ENCODE measurements at regions of chr1 and their contacts with region 1.

Region 1: DNA sequence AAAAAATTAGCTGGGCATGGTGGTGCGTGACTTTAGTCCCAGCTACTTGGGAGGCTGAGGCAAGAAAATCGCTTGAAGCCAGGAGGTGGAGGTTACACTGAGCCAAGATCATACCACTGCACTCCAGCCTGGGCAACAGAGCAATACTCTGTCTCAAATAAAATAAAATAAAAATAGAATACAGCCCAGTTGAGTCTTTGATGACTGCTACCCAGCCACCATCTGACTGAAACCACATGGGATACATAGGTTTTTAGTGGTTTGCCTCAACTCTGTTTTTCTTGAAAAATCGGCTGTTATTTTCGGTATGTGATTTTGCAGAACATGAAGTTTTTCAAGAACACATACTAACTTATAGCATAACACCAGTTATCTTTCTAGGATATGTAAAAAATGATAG is 46.5 kb downstream of the EPRS1 start:
- DNase-seq: no peak
- H3K4me3 ChIP-seq: no peak overlapping the region
- CTCF ChIP-seq: no peak

Region 2: DNA sequence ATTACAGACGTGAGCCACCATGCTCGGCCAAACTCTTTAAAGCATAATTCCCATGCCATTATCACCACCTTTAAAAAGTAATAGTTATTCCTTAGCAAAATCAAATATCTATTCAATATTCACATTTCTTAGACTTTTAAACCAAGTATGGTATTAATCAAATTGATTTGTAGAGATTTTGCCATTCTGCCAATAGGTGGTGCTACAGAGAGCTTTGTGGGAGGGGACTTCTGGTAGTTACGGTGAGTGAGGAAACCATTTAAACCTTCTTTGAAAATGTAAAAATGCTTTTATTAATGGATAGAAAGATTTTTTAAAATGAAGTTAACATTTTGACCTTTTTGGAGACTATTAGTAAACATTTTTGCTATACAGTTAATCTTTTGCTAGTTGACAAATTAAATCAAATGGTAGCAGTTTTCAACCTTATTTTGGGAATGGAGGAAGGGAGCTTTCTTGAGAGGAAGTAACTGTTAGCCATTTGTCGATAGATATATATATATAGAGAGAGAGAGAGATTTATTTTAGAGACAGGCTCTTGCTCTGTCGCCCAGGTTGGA is 113.4 kb after region 1 on chr1:
- in situ Hi-C with region 1: loop called (anchors 5 kb)
- DNase-seq: no peak
- H3K4me3 ChIP-seq: no peak overlapping the region
- CTCF ChIP-seq: peak; percentile 51